ENCODE measurements at regions of chr7 and their contacts with region 1.

Region 1: GRCh38 chr7:2405601-2406345 is 2.4 kb downstream of the CHST12 start:
- DNase-seq: no peak
- H3K4me3 ChIP-seq: no peak overlapping the region
- H3K27ac ChIP-seq: no peak overlapping the region
- H3K4me1 ChIP-seq: peaks cover 22% of the 10 kb centered on the region
- H3K27me3 ChIP-seq: no peaks in the 10 kb centered on the region
- CTCF ChIP-seq: no peak

Region 2: GRCh38 chr7:2360796-2361195 is 45.0 kb before region 1 on chr7:
- CTCF ChIA-PET with region 1: no interaction called
- dilution Hi-C with region 1: loop called (anchors 5 kb)
- in situ Hi-C with region 1: no loop called
- intact Hi-C with region 1: loop called (anchors 2 kb)
- DNase-seq: peak; percentile 83
- H3K4me3 ChIP-seq: no peak overlapping the region
- H3K27ac ChIP-seq: peak overlapping the region; percentile 86
- H3K4me1 ChIP-seq: peaks cover 28% of the 10 kb centered on the region
- H3K27me3 ChIP-seq: no peaks in the 10 kb centered on the region
- CTCF ChIP-seq: no peak

Region 3: GRCh38 chr7:2482725-2483451 is 77.1 kb after region 1 on chr7:
- CTCF ChIA-PET with region 1: no interaction called
- dilution Hi-C with region 1: loop called (anchors 5 kb)
- in situ Hi-C with region 1: no loop called
- intact Hi-C with region 1: no loop called
- DNase-seq: no peak
- H3K4me3 ChIP-seq: no peak overlapping the region
- H3K27ac ChIP-seq: no peak overlapping the region
- H3K4me1 ChIP-seq: peaks cover 10% of the 10 kb centered on the region
- H3K27me3 ChIP-seq: no peaks in the 10 kb centered on the region
- CTCF ChIP-seq: no peak

Region 4: GRCh38 chr7:2796358-2797352 is 390.9 kb after region 1 on chr7:
- CTCF ChIA-PET with region 1: no interaction called
- dilution Hi-C with region 1: no loop called
- in situ Hi-C with region 1: no loop called
- intact Hi-C with region 1: no loop called
- DNase-seq: no peak
- H3K4me3 ChIP-seq: no peak overlapping the region
- H3K27ac ChIP-seq: no peak overlapping the region
- H3K4me1 ChIP-seq: peaks cover 7% of the 10 kb centered on the region
- H3K27me3 ChIP-seq: no peaks in the 10 kb centered on the region
- CTCF ChIP-seq: no peak